HCT116 (cell line): ENCODE measurements at regions of chr5 and their contacts with region 1.

Region 1: DNA sequence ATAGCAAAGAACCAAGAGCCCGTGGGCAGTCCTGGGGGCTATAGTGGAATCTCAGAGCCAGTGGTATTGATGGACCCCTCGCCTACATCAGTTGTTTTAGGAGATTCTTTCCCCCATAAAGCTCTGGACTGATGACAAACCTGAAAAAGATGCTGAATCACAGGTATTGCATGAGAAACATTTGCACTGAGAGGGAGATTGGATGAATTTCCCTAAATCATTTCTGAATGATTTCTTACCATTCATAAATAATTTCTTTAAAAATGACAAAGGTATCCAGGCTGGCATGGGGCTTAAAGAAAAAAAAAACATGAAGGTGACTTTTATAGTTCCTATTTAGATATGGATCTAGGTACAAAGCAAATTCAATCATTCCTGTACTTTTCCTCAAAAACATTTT is 54.0 kb upstream of the SLIT3 start:
- DNase-seq: no peak
- ATAC-seq: no peak
- H3K4me3 ChIP-seq: no peak overlapping the region
- H3K27ac ChIP-seq: no peak overlapping the region
- H3K4me1 ChIP-seq: peaks cover 0 to 7% of the 10 kb centered on the region in 2 experiments; a peak in 2 of 4 replicates
- H3K27me3 ChIP-seq: 0 out of 2 replicates have a peak, but pooled peaks cover 6% of the 10 kb centered on the region
- CTCF ChIP-seq: no peak
- POLR2A ChIP-seq: no peak
- RAD21 ChIP-seq: no peak

Region 2: GRCh38 chr5:168987543-168988300 is 367.2 kb before region 1 on chr5:
- CTCF ChIA-PET with region 1: no interaction called
- POLR2A ChIA-PET with region 1: no interaction called
- RAD21 ChIA-PET with region 1: no interaction called
- intact Hi-C with region 1: no loop called
- DNase-seq: peak; percentile 32
- ATAC-seq: peak; percentile 88
- H3K4me3 ChIP-seq: no peak overlapping the region
- H3K27ac ChIP-seq: no peak overlapping the region
- H3K4me1 ChIP-seq: no peaks in the 10 kb centered on the region
- H3K27me3 ChIP-seq: peaks cover 54% of the 10 kb centered on the region
- CTCF ChIP-seq: peak; percentile 79 to 92 (median 86)
- POLR2A ChIP-seq: no peak
- RAD21 ChIP-seq: peak; percentile 92

Region 3: DNA sequence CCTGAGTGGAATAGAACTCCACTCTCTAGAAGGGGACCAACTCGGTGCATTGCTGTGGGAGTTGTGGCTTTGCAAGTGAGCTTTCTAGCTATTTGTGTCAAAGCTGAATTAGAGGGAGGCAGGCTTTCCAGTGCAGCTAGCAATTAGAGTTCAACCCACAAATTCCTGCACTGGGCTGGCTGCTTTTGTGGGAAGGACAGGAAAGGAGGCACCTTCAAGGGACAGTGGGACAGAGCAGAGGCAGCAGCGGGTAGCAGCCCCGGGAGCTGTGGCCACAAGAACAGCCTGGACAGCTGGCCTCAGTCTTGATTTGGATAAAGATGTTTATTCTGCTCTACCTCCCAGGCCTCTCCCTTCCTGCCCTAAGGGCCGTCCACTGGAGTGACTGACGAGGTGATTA is 29.7 kb after region 1 on chr5:
- CTCF ChIA-PET with region 1: no interaction called
- POLR2A ChIA-PET with region 1: no interaction called
- RAD21 ChIA-PET with region 1: no interaction called
- intact Hi-C with region 1: loop called (anchors 1 kb)
- DNase-seq: no peak
- ATAC-seq: no peak
- H3K4me3 ChIP-seq: no peak overlapping the region
- H3K27ac ChIP-seq: no peak overlapping the region
- H3K4me1 ChIP-seq: no peaks in the 10 kb centered on the region
- H3K27me3 ChIP-seq: no peaks in the 10 kb centered on the region
- CTCF ChIP-seq: no peak
- POLR2A ChIP-seq: no peak
- RAD21 ChIP-seq: no peak

Region 4: DNA sequence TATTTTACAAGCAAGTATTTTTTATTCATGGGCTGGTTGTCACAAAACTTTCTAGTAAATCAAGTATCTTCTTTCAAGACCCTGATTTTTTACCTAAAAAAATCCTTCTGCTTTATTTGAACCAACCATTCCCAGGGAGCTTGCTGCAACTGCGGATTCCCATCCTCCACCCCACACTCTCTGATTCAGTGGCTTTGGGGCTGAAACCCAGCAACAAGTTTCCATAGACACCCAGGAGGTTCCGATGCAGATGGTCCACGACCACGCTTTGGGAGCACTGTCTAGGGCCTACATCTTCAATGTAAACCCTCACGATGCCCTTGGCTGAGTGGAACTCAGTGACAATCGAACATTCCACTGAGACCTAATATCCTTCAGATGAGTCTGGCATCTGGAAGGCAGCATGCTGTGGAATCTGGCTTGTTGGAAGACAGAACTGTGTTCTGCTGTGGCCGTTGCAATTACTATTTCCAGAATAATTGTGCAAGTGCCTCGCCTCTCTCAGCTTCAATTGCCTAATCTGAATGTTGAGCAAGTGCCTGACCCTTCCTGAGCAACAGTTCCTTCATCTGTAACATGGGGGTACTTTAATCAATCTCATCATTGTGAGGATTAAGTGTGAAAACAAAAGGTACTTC is 520.3 kb after region 1 on chr5:
- CTCF ChIA-PET with region 1: no interaction called
- POLR2A ChIA-PET with region 1: no interaction called
- RAD21 ChIA-PET with region 1: no interaction called
- intact Hi-C with region 1: no loop called
- DNase-seq: no peak
- ATAC-seq: no peak
- H3K4me3 ChIP-seq: no peak overlapping the region
- H3K27ac ChIP-seq: no peak overlapping the region
- H3K4me1 ChIP-seq: no peaks in the 10 kb centered on the region
- H3K27me3 ChIP-seq: peaks cover 27% of the 10 kb centered on the region
- CTCF ChIP-seq: no peak
- POLR2A ChIP-seq: no peak
- RAD21 ChIP-seq: no peak

Region 5: GRCh38 chr5:169970339-169970738 is 615.4 kb after region 1 on chr5:
- CTCF ChIA-PET with region 1: no interaction called
- POLR2A ChIA-PET with region 1: no interaction called
- RAD21 ChIA-PET with region 1: no interaction called
- intact Hi-C with region 1: no loop called
- DNase-seq: no peak
- ATAC-seq: no peak
- H3K4me3 ChIP-seq: no peak overlapping the region
- H3K27ac ChIP-seq: no peak overlapping the region
- H3K4me1 ChIP-seq: peaks cover 0 to 9% of the 10 kb centered on the region in 2 experiments; a peak in 2 of 4 replicates
- H3K27me3 ChIP-seq: peaks cover 63% of the 10 kb centered on the region
- CTCF ChIP-seq: no peak
- POLR2A ChIP-seq: no peak
- RAD21 ChIP-seq: no peak